Activated CD8-positive, alpha-beta T cell treated with anti-CD3 and anti-CD28 coated beads for 36 hours (primary cell): ENCODE measurements at regions of chr3 and their contacts with region 1.

Region 1: GRCh38 chr3:183766745-183767606 is 58.4 kb downstream of the MAP6D1 start:
- DNase-seq: peak; percentile 82
- ATAC-seq: peak; percentile 90
- H3K4me3 Mint-ChIP-seq: no peak overlapping the region
- H3K27ac Mint-ChIP-seq: no peak overlapping the region
- H3K4me1 Mint-ChIP-seq: peaks cover 9% of the 10 kb centered on the region
- H3K27me3 Mint-ChIP-seq: no peaks in the 10 kb centered on the region
- CTCF ChIP-seq: peak; percentile 85

Region 2: GRCh38 chr3:183447206-183448001 is 319.6 kb before region 1 on chr3:
- CTCF ChIA-PET with region 1: no interaction called
- POLR2A ChIA-PET with region 1: no interaction called
- intact Hi-C with region 1: no loop called
- DNase-seq: peak; percentile 91
- ATAC-seq: peak; percentile 96
- H3K4me3 Mint-ChIP-seq: peak overlapping the region; percentile 95
- H3K27ac Mint-ChIP-seq: peak overlapping the region; percentile 85
- H3K4me1 Mint-ChIP-seq: peaks cover 10% of the 10 kb centered on the region
- H3K27me3 Mint-ChIP-seq: no peaks in the 10 kb centered on the region
- CTCF ChIP-seq: no peak

Region 3: GRCh38 chr3:183468424-183468823 is 298.6 kb before region 1 on chr3:
- CTCF ChIA-PET with region 1: interaction called, 19 read pairs
- POLR2A ChIA-PET with region 1: no interaction called
- intact Hi-C with region 1: loop called (anchors 1 kb)
- DNase-seq: no peak
- ATAC-seq: peak; percentile 59
- H3K4me3 Mint-ChIP-seq: no peak overlapping the region
- H3K27ac Mint-ChIP-seq: peak overlapping the region; percentile 86
- H3K4me1 Mint-ChIP-seq: peaks cover 20% of the 10 kb centered on the region
- H3K27me3 Mint-ChIP-seq: peaks cover 1% of the 10 kb centered on the region
- CTCF ChIP-seq: no peak

Region 4: DNA sequence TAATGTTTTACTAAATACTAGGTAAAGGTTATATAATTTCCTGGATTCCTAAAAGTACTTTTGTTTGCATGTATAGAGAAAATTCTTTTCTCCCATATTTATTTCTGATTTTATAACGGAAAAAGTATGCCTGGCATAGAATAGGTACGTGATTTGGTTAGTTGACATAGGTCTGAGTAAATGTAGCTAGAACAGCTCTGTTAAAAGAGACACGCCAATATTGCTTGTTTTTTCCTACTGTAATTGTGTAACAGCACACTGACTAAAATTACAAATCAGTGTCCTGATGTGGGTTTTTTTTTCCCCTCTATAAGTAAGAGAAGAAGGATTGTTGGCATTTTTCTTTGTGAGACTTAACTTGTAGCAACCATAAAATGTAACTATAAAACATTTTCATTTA is 104.9 kb before region 1 on chr3:
- CTCF ChIA-PET with region 1: no interaction called
- POLR2A ChIA-PET with region 1: no interaction called
- intact Hi-C with region 1: no loop called
- DNase-seq: no peak
- ATAC-seq: no peak
- H3K4me3 Mint-ChIP-seq: no peak overlapping the region
- H3K27ac Mint-ChIP-seq: no peak overlapping the region
- H3K4me1 Mint-ChIP-seq: peaks cover 31% of the 10 kb centered on the region
- H3K27me3 Mint-ChIP-seq: no peaks in the 10 kb centered on the region
- CTCF ChIP-seq: no peak

Region 5: GRCh38 chr3:183710231-183710630 is 56.7 kb before region 1 on chr3:
- CTCF ChIA-PET with region 1: interaction called, 12 read pairs
- POLR2A ChIA-PET with region 1: no interaction called
- intact Hi-C with region 1: no loop called
- DNase-seq: no peak
- ATAC-seq: no peak
- H3K4me3 Mint-ChIP-seq: no peak overlapping the region
- H3K27ac Mint-ChIP-seq: no peak overlapping the region
- H3K4me1 Mint-ChIP-seq: peaks cover 13% of the 10 kb centered on the region
- H3K27me3 Mint-ChIP-seq: no peaks in the 10 kb centered on the region
- CTCF ChIP-seq: no peak

Region 6: DNA sequence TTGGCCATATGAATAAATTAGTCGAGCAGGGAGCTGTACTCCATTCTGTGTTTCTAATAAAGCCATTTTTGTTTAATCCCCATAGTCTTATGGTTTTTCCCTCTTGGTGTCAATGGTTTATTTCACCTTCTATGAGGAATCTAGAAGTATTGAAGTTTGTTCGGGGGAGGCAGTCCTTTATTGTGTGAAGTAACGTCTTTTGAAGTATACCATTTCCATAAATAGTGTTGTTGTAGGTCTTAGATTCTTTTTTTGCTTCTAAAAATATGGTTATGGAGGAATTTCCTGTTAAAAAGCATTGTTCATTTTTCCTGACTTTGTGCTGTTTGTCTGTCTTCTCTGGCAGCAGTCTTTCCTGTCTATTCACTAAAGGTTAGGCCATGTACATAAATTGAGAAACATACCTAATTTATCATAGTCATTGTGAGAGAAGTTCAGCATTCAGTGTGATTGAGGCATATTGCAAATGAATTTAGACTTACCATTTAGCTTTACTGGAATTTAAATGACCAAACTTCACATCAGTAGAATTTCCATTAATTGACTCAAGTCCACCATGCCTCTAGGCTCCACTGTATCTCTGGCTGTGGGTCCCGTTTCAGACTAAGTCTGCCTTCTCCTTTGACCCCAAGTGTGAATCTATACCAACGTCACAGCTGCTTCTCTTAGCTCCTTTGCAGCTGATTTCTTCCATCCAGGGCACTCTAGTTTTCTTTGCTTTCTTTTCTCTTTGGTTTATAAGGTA is 32.1 kb before region 1 on chr3:
- CTCF ChIA-PET with region 1: no interaction called
- POLR2A ChIA-PET with region 1: no interaction called
- intact Hi-C with region 1: no loop called
- DNase-seq: no peak
- ATAC-seq: no peak
- H3K4me3 Mint-ChIP-seq: no peak overlapping the region
- H3K27ac Mint-ChIP-seq: no peak overlapping the region
- H3K4me1 Mint-ChIP-seq: no peaks in the 10 kb centered on the region
- H3K27me3 Mint-ChIP-seq: no peaks in the 10 kb centered on the region
- CTCF ChIP-seq: no peak

Region 7: DNA sequence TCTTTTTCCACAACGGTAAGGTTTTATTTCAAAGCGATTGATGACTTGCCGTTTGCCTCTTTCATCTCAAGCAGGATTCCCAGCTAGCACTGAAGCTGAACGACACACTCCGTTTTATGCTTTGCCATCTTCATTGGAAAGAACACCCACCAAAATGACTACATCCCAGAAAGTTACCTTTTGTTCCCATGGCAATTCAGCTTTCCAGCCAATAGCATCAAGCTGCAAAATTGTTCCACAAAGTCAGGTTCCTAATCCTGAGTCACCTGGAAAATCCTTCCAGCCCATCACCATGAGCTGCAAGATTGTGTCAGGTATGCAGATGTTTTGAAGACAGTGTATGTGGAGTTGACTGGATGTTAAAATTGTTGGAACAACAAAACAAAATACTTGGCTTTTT is 12.9 kb before region 1 on chr3:
- CTCF ChIA-PET with region 1: interaction called, 11 read pairs
- POLR2A ChIA-PET with region 1: interaction called, 4 read pairs
- intact Hi-C with region 1: no loop called
- DNase-seq: no peak
- ATAC-seq: no peak
- H3K4me3 Mint-ChIP-seq: no peak overlapping the region
- H3K27ac Mint-ChIP-seq: no peak overlapping the region
- H3K4me1 Mint-ChIP-seq: no peaks in the 10 kb centered on the region
- H3K27me3 Mint-ChIP-seq: no peaks in the 10 kb centered on the region
- CTCF ChIP-seq: no peak

Region 8: DNA sequence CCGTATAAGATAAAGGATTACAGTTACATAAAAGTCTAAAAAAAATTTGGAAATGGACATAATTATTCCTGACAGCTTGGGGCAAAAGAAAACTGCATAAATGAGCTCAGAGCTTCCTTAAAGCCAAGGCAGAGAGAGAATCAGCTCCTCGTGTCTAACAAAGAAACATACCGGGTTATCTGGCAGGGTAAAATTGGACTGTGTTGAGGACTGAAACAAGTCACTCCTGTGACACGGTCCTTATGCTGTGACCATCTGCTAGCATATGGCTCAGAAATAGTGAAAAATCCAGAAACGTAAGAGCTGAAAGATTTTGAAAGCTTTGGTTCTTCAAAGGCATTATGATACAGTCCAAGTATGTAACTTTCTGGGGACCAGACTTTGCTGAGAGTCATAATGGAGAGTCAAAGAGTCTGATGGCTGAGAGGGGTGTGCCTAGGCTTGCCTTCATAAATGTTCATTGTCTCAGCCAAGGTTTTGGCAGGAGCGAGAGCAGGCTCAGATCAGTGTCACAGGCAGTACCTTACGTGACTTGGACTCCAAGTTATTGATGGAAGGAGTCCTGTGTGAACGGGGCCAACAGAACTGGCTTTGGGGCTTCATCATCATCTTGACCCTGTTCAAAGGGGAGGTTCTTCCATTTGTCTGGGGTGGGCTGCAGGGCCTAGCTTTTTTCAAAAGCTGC is 45.9 kb after region 1 on chr3:
- CTCF ChIA-PET with region 1: no interaction called
- POLR2A ChIA-PET with region 1: no interaction called
- intact Hi-C with region 1: no loop called
- DNase-seq: no peak
- ATAC-seq: no peak
- H3K4me3 Mint-ChIP-seq: no peak overlapping the region
- H3K27ac Mint-ChIP-seq: peak overlapping the region; percentile 58
- H3K4me1 Mint-ChIP-seq: no peaks in the 10 kb centered on the region
- H3K27me3 Mint-ChIP-seq: no peaks in the 10 kb centered on the region
- CTCF ChIP-seq: no peak